WTC11 (cell line): ENCODE measurements at regions of chr11 and their contacts with region 1.

Region 1: DNA sequence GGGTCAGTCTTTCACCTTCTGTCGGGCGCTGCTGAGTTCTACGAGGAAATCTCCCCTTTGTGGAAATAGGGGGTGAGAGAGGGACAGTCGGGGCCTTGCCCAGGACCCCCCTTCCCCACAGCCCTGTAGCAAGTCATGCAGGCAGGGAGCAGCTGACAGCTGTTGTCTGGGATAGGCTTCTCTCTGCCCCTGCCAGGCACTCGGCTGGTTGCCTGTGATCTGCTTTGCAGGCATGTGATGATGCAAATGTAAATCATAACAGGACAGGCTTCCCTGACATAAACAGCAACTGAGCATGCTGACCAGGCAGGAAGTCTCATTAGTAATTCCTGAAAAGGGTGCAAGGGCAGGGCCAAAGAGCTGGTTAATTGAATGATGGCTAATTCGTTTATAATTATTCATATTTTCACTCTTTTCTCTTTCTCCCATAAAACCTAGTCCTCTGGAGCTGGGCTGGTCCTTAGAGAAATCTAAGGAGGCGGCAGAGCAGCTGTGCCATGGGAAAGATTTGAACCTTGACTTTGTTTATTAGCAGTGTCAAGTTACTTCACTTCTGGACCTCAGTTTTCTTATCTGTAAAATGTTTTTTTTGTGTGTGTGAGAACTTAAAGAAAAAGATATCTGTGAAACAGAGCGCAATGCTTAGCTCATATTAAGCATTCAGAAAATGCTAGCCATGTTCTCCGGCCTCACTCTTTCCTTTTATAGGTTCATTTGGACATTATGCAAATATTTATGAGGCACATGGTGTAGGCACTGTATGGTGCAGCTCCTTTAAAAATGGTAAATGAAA is 129.7 kb downstream of the LDLRAD3 start:
- DNase-seq: no peak
- ATAC-seq: no peak
- H3K4me3 Mint-ChIP-seq: no peak overlapping the region
- H3K27ac Mint-ChIP-seq: peak overlapping the region; percentile 82
- H3K4me1 Mint-ChIP-seq: peaks cover 59% of the 10 kb centered on the region
- H3K27me3 Mint-ChIP-seq: no peaks in the 10 kb centered on the region; the same call in 1 of the 2 replicates
- CTCF ChIP-seq: no peak

Region 2: GRCh38 chr11:36041988-36042611 is 31.5 kb before region 1 on chr11:
- CTCF ChIA-PET with region 1: interaction called, 38 read pairs
- POLR2A ChIA-PET with region 1: no interaction called
- DNase-seq: no peak
- ATAC-seq: peak; percentile 70; the same call in 1 of the 2 replicates
- H3K4me3 Mint-ChIP-seq: no peak overlapping the region
- H3K27ac Mint-ChIP-seq: peak overlapping the region; percentile 91
- H3K4me1 Mint-ChIP-seq: peaks cover 14% of the 10 kb centered on the region
- H3K27me3 Mint-ChIP-seq: no peaks in the 10 kb centered on the region
- CTCF ChIP-seq: no peak

Region 3: DNA sequence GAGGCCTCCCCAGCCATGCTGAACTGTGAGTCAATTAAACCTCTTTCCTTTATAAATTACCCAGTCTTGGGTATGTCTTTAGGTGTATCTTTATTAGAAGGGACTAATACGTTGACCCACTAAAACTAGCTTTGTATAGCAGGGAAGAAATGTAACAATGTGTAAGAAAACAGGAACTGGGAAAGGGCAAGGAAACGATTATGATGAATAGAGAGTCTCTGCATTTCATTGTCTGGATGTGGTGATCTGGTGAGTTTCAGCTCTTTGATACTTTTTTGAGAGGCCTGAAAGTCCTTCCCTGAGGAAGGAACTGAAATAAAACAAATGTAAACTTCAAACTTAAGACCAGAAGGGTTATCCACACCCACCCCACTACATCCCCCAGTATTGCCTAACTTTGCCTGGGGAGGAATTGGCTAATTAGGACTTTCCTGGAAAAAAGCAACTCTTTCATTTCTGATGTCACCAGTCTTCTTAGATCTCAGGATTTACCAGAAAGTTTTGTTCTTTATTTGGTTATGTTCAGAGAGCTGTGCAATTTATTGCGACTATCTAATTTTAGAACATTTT is 10.7 kb before region 1 on chr11:
- CTCF ChIA-PET with region 1: interaction called, 66 read pairs
- POLR2A ChIA-PET with region 1: interaction called, 4 read pairs
- DNase-seq: no peak
- ATAC-seq: no peak
- H3K4me3 Mint-ChIP-seq: no peak overlapping the region
- H3K27ac Mint-ChIP-seq: peak overlapping the region; percentile 47; the same call in 1 of the 2 replicates
- H3K4me1 Mint-ChIP-seq: peaks cover 15% of the 10 kb centered on the region
- H3K27me3 Mint-ChIP-seq: no peaks in the 10 kb centered on the region
- CTCF ChIP-seq: no peak

Region 4: GRCh38 chr11:36109850-36110606 is 36.4 kb after region 1 on chr11:
- CTCF ChIA-PET with region 1: interaction called, 19 read pairs
- POLR2A ChIA-PET with region 1: interaction called, 5 read pairs
- DNase-seq: peak; percentile 47
- ATAC-seq: peak; percentile 77
- H3K4me3 Mint-ChIP-seq: peak overlapping the region; percentile 40
- H3K27ac Mint-ChIP-seq: peak overlapping the region; percentile 99
- H3K4me1 Mint-ChIP-seq: peaks cover 60% of the 10 kb centered on the region
- H3K27me3 Mint-ChIP-seq: no peaks in the 10 kb centered on the region; the same call in 1 of the 2 replicates
- CTCF ChIP-seq: no peak

Region 5: GRCh38 chr11:36205536-36205935 is 131.9 kb after region 1 on chr11:
- CTCF ChIA-PET with region 1: no interaction called
- POLR2A ChIA-PET with region 1: no interaction called
- DNase-seq: no peak
- ATAC-seq: no peak
- H3K4me3 Mint-ChIP-seq: no peak overlapping the region
- H3K27ac Mint-ChIP-seq: no peak overlapping the region
- H3K4me1 Mint-ChIP-seq: peaks cover 3% of the 10 kb centered on the region; the same call in 1 of the 2 replicates
- H3K27me3 Mint-ChIP-seq: no peaks in the 10 kb centered on the region
- CTCF ChIP-seq: no peak

Region 6: GRCh38 chr11:36265793-36266628 is 192.4 kb after region 1 on chr11:
- CTCF ChIA-PET with region 1: interaction called, 16 read pairs
- POLR2A ChIA-PET with region 1: no interaction called
- DNase-seq: peak; percentile 80
- ATAC-seq: peak; percentile 93
- H3K4me3 Mint-ChIP-seq: no peak overlapping the region
- H3K27ac Mint-ChIP-seq: no peak overlapping the region
- H3K4me1 Mint-ChIP-seq: peaks cover 2% of the 10 kb centered on the region
- H3K27me3 Mint-ChIP-seq: peaks cover 2% of the 10 kb centered on the region
- CTCF ChIP-seq: peak; percentile 82